AG04449 (cell line): ENCODE measurements at regions of chr6 and their contacts with region 1.

Region 1: DNA sequence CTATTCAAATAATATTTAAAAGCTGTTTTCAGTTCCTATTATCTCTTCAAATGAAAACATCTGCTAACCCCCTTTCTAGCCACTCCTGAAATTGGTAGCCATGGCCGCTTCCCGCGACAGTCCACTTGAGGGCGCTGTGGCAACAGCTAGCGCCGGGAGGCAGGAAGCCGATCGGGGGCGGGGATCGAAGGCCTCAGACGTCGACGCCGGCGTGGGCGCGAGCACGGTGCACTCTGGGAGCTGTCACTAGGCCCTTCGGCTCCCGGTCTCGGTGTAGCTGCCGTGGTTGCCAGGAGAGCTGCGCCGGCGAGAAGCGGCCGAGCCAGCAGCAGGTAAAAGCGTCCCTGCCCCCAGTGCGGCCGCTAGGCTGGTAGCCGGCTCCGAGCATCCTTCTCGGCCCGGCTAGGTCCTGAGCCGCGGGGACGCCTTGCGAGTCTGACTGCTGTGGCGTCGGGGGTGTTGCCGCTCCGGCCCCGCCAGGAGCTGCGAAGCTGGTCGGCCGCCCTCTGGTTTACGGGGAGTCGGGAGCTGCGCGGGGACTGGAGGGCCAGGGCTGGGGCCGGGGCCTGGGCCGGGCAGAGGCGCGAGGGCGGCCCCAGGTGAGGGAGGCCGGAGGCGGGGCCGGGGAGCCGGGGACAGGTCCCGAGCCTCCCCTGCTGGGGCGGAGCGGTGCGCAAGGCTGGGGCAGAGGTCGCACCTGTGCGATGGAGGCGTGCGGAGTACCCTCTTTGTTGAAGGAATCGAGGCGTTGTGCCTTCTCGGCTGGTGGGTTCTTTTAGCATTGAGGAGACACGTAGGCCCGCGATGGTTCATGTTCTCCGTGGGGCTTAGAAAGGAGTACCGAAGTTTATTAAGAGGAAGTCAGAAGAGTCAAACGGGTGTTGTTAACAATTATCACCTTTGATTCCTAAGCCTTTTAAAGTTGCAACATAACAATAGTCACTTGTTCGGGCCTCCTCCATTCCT is at the start of gene DOP1A:
- DNase-seq: peak; percentile 44
- H3K4me3 ChIP-seq: peak within 1 kb of the TSS; percentile 87
- CTCF ChIP-seq: peak; percentile 95

Region 2: DNA sequence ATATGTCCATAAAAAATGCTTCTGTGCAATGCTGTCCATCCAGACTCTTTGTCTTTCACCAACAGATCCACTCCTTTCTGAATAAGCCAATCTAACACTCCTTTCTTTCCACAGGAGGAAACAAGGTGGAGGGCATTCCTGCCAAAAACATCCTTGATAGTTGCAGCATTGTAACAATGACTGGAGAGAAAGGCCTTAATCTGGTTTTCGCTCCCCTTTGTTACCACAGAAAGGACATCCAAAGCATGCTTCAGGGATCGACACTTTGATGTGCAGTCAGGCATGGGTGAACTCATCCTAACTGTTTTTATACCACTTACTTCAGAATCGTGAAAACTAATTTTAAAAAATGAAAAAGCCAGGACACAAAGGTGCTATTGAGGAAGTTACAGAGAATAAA is 827.5 kb before region 1 on chr6:
- CTCF ChIA-PET with region 1: interaction called, 12 read pairs
- POLR2A ChIA-PET with region 1: no interaction called
- DNase-seq: no peak
- H3K4me3 ChIP-seq: no peak overlapping the region
- CTCF ChIP-seq: no peak

Region 3: GRCh38 chr6:82862543-82862942 is 205.2 kb before region 1 on chr6:
- CTCF ChIA-PET with region 1: interaction called, 16 read pairs
- POLR2A ChIA-PET with region 1: no interaction called
- DNase-seq: peak; percentile 83
- H3K4me3 ChIP-seq: no peak overlapping the region
- CTCF ChIP-seq: no peak

Region 4: GRCh38 chr6:83108378-83108777 is 40.6 kb after region 1 on chr6:
- CTCF ChIA-PET with region 1: interaction called, 44 read pairs
- POLR2A ChIA-PET with region 1: no interaction called
- DNase-seq: no peak
- H3K4me3 ChIP-seq: no peak overlapping the region
- CTCF ChIP-seq: no peak

Region 5: DNA sequence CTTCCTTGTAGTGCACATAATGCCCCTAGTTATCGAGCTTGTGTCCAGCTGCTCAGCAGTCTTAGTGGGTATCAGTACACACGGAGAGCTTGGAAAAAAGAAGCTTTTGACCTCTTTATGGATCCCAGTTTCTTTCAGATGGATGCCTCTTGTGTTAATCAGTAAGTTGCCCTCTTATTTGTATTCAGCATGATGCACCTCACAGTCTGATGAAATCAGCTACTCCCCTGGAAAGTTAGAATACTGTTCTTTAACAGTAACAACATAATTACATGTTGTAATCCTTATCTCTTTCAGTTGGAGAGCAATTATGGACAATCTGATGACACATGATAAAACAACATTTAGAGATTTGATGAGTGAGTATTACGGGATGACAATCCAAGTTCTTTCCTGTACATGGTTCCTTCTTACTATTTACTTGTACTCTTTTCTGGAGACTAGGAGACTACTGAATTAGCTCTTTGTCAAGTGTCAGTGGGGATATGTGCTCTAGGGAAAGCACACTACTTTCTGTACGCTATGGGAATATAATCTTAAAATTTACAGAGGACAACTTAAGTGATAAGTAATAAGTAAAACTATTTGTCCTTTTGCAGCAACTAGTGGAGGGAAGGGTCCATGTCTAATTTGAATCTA is 86.3 kb after region 1 on chr6:
- CTCF ChIA-PET with region 1: interaction called, 26 read pairs
- POLR2A ChIA-PET with region 1: no interaction called
- DNase-seq: no peak
- H3K4me3 ChIP-seq: no peak overlapping the region
- CTCF ChIP-seq: no peak

Region 6: DNA sequence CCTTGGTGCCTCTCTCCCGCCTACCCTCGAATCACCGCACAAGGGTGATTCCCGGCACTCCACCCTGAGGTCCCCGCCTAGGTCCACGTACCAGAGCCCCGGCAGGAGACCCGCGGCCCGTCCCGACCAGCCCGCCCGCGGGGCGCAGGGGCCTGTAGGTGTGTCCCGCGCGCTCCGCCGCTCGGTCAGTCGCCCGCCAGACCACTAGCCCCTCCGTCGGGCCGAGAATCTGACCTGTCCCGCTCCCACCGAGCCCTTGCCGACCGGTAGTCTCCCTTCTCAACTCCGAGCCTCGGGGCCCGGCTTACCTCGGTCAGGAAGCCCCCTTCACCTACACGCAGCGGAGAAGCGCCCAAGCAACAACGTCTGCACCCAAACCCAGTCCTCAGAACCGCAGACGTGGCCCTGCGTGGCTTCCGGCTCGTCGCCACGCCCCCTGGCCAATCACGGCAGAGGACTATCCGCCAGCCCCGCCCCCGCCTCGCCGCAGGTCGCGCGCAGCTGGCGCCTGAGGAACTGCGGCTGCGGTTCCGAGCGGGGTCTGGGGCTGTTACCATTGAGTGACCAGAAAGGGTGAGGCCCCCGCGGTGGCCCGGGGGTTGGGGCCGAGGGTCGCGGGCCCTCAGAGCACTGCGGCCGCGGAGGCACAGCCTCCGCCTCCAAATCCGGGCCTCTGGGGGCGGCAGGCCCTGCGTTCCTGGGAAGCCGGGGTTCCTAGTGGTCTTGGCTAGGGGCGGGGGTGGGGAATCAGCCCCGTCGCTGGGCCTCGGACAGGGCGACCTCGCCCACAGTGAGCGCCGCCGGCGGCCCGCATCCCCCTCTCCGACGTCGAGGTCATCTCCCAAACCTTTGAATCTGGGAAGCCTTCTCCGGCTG is 125.4 kb after region 1 on chr6 and contains the starts of genes PGM3 and RWDD2A:
- CTCF ChIA-PET with region 1: interaction called, 111 read pairs
- POLR2A ChIA-PET with region 1: interaction called, 4 read pairs
- DNase-seq: no peak
- H3K4me3 ChIP-seq: peak within 1 kb of the TSS; percentile 91
- CTCF ChIP-seq: no peak

Region 7: GRCh38 chr6:83417880-83418663 is 350.3 kb after region 1 on chr6:
- CTCF ChIA-PET with region 1: interaction called, 31 read pairs
- POLR2A ChIA-PET with region 1: no interaction called
- DNase-seq: peak; percentile 14
- H3K4me3 ChIP-seq: no peak overlapping the region
- CTCF ChIP-seq: peak; percentile 60

Region 8: GRCh38 chr6:83920017-83920416 is 852.3 kb after region 1 on chr6:
- CTCF ChIA-PET with region 1: no interaction called
- POLR2A ChIA-PET with region 1: no interaction called
- DNase-seq: peak; percentile 64
- H3K4me3 ChIP-seq: no peak overlapping the region
- CTCF ChIP-seq: no peak